ENCODE measurements at regions of chr15 and their contacts with region 1.

Region 1: GRCh38 chr15:64460206-64460734 is at the start of gene ZNF609:
- DNase-seq: peak; percentile 86
- H3K4me3 Mint-ChIP-seq: peak within 1 kb of the TSS; percentile 87
- H3K27ac Mint-ChIP-seq: peak within 1 kb of the TSS; percentile 82
- H3K4me1 Mint-ChIP-seq: peaks cover 68% of the 10 kb centered on the region
- H3K27me3 Mint-ChIP-seq: no peaks in the 10 kb centered on the region
- total RNA-seq, gene ZNF609: 50.9 and 60.2 TPM in 2 replicates

Region 2: DNA sequence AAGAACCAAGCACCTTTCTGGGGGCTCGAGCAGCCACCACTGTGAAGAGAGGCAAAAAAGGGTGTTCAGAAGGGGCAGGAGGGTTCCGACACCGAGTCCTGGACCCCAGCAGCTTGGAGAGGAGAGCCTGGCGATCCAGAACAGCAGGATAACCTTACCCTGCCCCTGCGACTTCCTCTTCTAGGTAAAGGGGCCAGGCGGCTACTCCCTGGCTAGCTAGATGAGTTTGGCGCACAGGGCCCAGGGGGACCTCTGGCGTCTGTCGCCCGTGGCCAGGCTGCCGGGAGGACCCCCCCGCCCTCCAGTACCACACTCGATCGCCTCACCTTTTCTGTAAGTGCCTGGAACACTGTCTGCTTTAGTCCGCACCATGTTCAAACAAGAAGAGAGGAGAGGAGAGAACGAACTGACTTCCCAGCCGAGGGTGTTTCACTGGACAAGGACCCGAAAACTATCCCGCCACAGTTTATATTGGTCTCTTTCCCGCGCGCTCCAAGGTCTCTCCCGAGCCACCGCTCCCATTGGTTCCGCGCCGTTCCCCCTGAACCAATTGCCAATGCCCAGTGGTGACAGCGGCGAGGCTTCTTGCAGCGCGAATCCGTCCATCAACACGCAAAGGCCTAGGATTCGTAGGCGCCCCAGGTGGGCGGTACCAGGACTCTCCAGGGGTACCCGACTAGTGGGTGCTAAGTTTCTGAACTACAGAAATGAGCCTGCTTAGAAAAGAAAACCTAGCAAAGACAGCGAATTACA is 79.1 kb before region 1 on chr15 and contains the start of gene PCLAF:
- intact Hi-C with region 1: loop called (anchors 2 kb)
- DNase-seq: peak; percentile 93
- H3K4me3 Mint-ChIP-seq: peak within 1 kb of the TSS; percentile 89
- H3K27ac Mint-ChIP-seq: peak within 1 kb of the TSS; percentile 85
- H3K4me1 Mint-ChIP-seq: peaks cover 16% of the 10 kb centered on the region
- H3K27me3 Mint-ChIP-seq: no peaks in the 10 kb centered on the region
- total RNA-seq, gene PCLAF: 59.9 and 72.3 TPM in 2 replicates

Region 3: DNA sequence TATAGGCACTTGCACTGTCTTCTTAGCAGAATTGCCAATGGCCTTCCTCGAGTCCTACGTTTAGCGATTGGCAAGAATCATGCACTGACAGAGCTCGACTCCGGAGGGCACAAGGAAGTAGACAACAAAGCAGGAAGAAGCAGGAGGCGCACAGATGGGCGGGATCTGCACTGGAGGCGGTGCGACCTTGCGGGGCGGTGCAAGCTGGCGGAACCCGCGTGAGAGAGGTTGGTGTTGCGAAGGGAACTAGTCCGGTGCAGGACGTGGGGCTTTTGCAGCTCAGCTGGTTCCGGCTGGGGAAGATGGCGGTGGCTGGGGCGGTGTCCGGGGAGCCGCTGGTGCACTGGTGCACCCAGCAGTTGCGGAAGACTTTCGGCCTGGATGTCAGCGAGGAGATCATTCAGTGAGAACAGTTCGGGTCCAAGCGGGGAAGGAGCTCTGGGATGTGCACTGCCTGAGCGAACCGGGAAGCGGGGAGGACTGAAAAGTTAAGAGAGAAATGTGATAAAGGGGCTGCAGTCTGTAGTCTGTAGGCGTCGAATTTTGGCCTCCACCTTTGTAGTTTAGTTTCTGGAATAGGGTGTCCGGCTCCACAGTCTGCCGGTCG is 72.6 kb before region 1 on chr15 and contains the start of gene TRIP4:
- intact Hi-C with region 1: loop called (anchors 1 kb)
- DNase-seq: peak; percentile 96
- H3K4me3 Mint-ChIP-seq: peak within 1 kb of the TSS; percentile 100
- H3K27ac Mint-ChIP-seq: peak within 1 kb of the TSS; percentile 93
- H3K4me1 Mint-ChIP-seq: peaks cover 14% of the 10 kb centered on the region
- H3K27me3 Mint-ChIP-seq: no peaks in the 10 kb centered on the region
- total RNA-seq, gene TRIP4: 17.9 and 20.7 TPM in 2 replicates

Region 4: DNA sequence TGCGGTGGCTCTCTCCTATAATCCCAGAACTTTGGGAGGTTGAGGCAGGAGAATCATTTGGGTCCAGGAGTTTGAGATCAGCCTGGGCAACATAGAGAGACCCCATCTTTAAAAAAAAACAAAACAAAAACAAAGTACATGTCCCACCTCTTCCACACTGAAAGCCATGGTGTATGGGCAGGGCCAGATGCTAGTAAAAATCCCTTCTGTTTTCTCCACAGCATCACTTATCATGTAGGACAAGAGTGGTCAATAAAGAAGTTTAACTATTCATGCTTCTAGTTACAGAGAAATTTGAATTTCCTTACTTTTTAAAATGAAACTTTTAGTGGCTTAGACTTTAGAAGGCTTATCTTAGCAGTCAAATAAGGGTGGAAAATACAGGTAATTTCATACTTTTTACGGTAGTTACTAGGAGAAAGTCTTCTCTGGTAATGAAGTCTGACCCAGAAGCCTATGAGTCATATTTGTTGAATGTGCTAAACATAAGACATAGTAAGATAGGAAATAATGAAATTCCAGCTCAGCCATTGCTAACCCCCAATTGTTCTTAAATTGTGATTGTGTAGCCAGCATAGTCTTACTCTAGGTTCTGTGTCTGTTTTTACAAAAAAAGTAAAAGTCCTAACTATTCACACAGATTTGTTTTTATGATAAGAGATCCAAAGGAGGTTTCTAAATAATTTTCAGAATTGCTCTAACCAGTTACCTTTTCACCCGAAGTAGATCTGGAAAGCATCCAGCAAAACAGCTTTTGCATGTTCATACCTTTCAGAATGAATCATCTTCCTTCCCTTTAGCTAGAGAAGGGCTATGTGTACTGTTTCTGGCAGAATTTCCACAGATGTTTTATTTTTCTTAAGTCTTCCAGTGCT is 16.3 kb before region 1 on chr15:
- intact Hi-C with region 1: loop called (anchors 1 kb)
- DNase-seq: no peak
- H3K4me3 Mint-ChIP-seq: peak overlapping the region; percentile 77
- H3K27ac Mint-ChIP-seq: peak overlapping the region; percentile 97
- H3K4me1 Mint-ChIP-seq: peaks cover 45% of the 10 kb centered on the region
- H3K27me3 Mint-ChIP-seq: no peaks in the 10 kb centered on the region

Region 5: GRCh38 chr15:64571857-64572291 is 111.6 kb after region 1 on chr15:
- intact Hi-C with region 1: loop called (anchors 1 kb)
- DNase-seq: no peak
- H3K4me3 Mint-ChIP-seq: no peak overlapping the region
- H3K27ac Mint-ChIP-seq: peak overlapping the region; percentile 55
- H3K4me1 Mint-ChIP-seq: peaks cover 54% of the 10 kb centered on the region
- H3K27me3 Mint-ChIP-seq: no peaks in the 10 kb centered on the region